Heart left ventricle (tissue), 16 donors: ENCODE measurements at regions of chr19 and their contacts with region 1.

Region 1: DNA sequence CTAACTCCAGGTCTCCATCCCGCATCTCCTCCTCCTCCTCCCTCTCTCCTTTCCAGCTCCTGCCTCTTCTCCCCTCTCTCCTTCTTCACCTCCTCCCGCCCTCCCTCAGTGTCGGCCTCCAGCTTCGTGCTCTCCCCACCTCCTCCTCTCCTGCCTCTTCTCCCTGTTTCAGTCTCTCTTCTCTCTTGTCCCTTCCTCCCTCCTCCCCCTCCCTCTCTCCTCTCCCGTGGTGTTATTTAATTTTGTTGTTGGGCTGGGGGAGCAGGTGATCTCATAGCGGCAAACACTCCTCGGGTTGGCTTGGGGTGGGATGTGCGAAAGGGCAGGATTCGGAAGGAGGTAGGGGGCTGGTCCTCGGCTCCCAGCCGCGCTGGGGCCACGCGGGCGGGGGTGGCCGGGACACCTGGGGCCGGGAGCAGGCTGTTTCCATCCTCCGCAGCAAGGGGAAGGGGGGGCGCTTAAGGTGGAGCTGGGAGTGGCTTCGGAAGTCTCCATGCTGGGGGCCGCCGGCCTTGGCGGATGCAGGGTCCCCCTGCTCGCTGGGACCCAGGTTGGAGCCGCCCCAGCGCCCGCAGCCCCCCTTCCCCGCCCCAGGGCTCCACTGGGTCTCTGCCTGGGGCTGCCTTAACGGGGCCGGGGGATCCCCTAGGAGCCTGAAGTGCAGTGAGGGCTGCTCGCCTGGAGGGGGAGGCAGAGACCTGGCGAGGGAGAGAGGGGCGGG is at the start of gene CA11:
- DNase-seq: peak; percentile 89 to 94 (median 91)
- ATAC-seq: peak; percentile 69 to 92 (median 92)
- H3K4me3 ChIP-seq: peak within 1 kb of the TSS; percentile 2 to 69 (median 58)
- H3K27ac ChIP-seq: peak within 1 kb of the TSS; percentile 56 to 91 (median 82)
- H3K4me1 ChIP-seq: peaks cover 0 to 29% (median 13%) of the 10 kb centered on the region in 12 donors
- H3K27me3 ChIP-seq: no peaks in the 10 kb centered on the region
- CTCF ChIP-seq: peak; percentile 82 to 98 (median 90)
- POLR2A ChIP-seq: no peak
- total RNA-seq, gene CA11: 2.2 to 14.6 (median 5.8) TPM

Region 2: GRCh38 chr19:48713864-48714758 is 68.0 kb after region 1 on chr19:
- intact Hi-C with region 1: loop called in 2 of 10 experiments (anchors 5 to 10 kb)
- DNase-seq: peak; percentile 99 to 100 (median 99)
- ATAC-seq: peak; percentile 91 to 94 (median 92)
- H3K4me3 ChIP-seq: peak overlapping the region; percentile 45 to 84 (median 68)
- H3K27ac ChIP-seq: peak overlapping the region; percentile 76 to 91 (median 87)
- H3K4me1 ChIP-seq: peaks cover 4 to 53% (median 34%) of the 10 kb centered on the region in 12 donors
- H3K27me3 ChIP-seq: no peaks in the 10 kb centered on the region
- CTCF ChIP-seq: peak in 1 of 12 donors; percentile 16
- POLR2A ChIP-seq: peak in 1 of 2 donors; percentile 50

Region 3: GRCh38 chr19:48795055-48795684 is 149.0 kb after region 1 on chr19:
- intact Hi-C with region 1: loop called in 1 of 10 experiments (anchors 10 kb)
- DNase-seq: peak; percentile 92 to 95 (median 94)
- ATAC-seq: peak; percentile 98 to 99 (median 99)
- H3K4me3 ChIP-seq: peak overlapping the region in 11 of 12 donors; percentile 24 to 74 (median 57)
- H3K27ac ChIP-seq: peak overlapping the region; percentile 7 to 91 (median 74)
- H3K4me1 ChIP-seq: peaks cover 0 to 13% (median 7%) of the 10 kb centered on the region in 12 donors
- H3K27me3 ChIP-seq: no peaks in the 10 kb centered on the region
- CTCF ChIP-seq: peak; percentile 88 to 100 (median 98)
- POLR2A ChIP-seq: peak in 1 of 2 donors; percentile 31

Region 4: DNA sequence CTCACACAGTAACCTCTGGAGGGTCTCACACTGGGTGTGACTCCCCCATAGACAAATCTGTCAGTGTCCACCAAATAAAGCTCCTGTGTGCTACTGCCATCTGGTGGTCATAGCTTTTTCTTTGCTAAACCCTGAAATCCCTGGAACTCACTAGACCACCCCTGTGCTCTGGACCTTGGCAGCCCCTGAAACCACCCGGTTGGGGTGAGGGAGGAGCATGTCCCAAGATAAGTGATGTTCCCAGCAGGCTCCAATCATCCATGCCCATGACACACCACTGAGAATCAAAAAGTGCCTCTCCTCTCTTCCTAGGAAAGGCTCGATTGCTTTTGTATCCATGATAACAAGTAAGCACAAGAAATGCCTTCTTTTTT is 196.6 kb after region 1 on chr19:
- intact Hi-C with region 1: loop called in 8 of 10 experiments (anchors 2 to 10 kb)
- DNase-seq: peak in 2 of 5 donors; percentile 36 to 37
- ATAC-seq: peak; percentile 10 to 70 (median 50)
- H3K4me3 ChIP-seq: no peak overlapping the region
- H3K27ac ChIP-seq: no peak overlapping the region
- H3K4me1 ChIP-seq: no peaks in the 10 kb centered on the region
- H3K27me3 ChIP-seq: no peaks in the 10 kb centered on the region
- CTCF ChIP-seq: peak; percentile 72 to 85 (median 78)
- POLR2A ChIP-seq: no peak

Region 5: GRCh38 chr19:48970923-48971395 is 324.8 kb after region 1 on chr19:
- intact Hi-C with region 1: loop called in 2 of 10 experiments (anchors 10 kb)
- DNase-seq: peak; percentile 77 to 91 (median 82)
- ATAC-seq: peak; percentile 48 to 67 (median 54)
- H3K4me3 ChIP-seq: no peak overlapping the region
- H3K27ac ChIP-seq: peak overlapping the region in 5 of 12 donors; percentile 2 to 23 (median 16)
- H3K4me1 ChIP-seq: peaks cover 5 to 48% (median 31%) of the 10 kb centered on the region in 12 donors
- H3K27me3 ChIP-seq: no peaks in the 10 kb centered on the region
- CTCF ChIP-seq: peak; percentile 83 to 97 (median 92)
- POLR2A ChIP-seq: no peak